GM12878 (cell line): ENCODE measurements at regions of chr1 and their contacts with region 1.

Region 1: GRCh38 chr1:90561911-90562310 is 155.2 kb downstream of the BARHL2 start:
- DNase-seq: no peak
- ATAC-seq: peak; percentile 65
- H3K4me3 ChIP-seq: no peak overlapping the region
- H3K27ac ChIP-seq: no peak overlapping the region
- H3K4me1 ChIP-seq: no peaks in the 10 kb centered on the region
- H3K27me3 ChIP-seq: no peaks in the 10 kb centered on the region
- CTCF ChIP-seq: no peak
- EP300 ChIP-seq: no peak
- POLR2A ChIP-seq: no peak
- RAD21 ChIP-seq: no peak

Region 2: DNA sequence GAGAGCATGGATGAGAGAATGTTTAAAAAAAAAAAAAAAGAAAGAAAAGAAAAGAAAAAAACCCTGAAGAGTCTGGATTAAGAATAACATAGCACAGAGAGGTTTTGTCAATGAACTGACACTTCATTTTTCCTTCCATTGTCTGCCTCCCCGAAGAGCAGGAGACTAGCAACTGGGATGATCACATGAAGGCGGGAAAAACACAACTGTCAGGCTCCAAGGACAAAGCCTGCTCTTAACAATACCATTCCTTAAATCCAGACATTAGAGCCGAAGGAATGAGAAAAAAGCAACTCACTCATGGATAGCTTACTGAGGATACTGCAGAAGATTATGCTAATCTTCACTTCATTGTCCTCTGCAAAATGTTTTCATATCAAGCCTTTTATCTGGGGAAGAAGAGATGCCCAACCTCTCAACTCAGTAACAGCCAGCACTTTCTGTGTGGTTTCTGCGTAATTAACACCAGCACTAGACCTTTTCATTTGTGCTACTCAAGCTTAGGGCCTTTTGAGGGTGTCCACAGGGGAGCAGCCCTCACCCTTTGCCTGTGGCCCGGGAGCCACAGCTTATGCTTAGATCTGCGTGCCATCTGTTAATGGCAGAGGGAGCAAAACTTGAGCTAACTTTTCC is 27.1 kb before region 1 on chr1:
- CTCF ChIA-PET with region 1: interaction called, 7 read pairs
- POLR2A ChIA-PET with region 1: interaction called, 6 read pairs
- RAD21 ChIA-PET with region 1: interaction called, 16 read pairs
- SMC1A ChIA-PET with region 1: interaction called, 22 read pairs
- in situ Hi-C with region 1: no loop called
- intact Hi-C with region 1: no loop called
- DNase-seq: no peak
- ATAC-seq: peak; percentile 64
- H3K4me3 ChIP-seq: no peak overlapping the region
- H3K27ac ChIP-seq: no peak overlapping the region
- H3K4me1 ChIP-seq: no peaks in the 10 kb centered on the region
- H3K27me3 ChIP-seq: peaks cover 0 to 3% of the 10 kb centered on the region in 2 experiments; a peak in 1 of 4 replicates
- CTCF ChIP-seq: no peak; a peak in 1 of 6 replicates
- EP300 ChIP-seq: 0 out of 4 replicates have a peak, but pooled peaks of 1 of the 2 experiments have one; percentile 28
- POLR2A ChIP-seq: no peak
- RAD21 ChIP-seq: no peak

Region 3: GRCh38 chr1:90850898-90851710 is 289.2 kb after region 1 on chr1:
- CTCF ChIA-PET with region 1: no interaction called
- POLR2A ChIA-PET with region 1: no interaction called
- RAD21 ChIA-PET with region 1: no interaction called
- SMC1A ChIA-PET with region 1: no interaction called
- in situ Hi-C with region 1: no loop called
- intact Hi-C with region 1: no loop called
- DNase-seq: no peak
- ATAC-seq: peak; percentile 99
- H3K4me3 ChIP-seq: peak overlapping the region; percentile 88
- H3K27ac ChIP-seq: no peak overlapping the region
- H3K4me1 ChIP-seq: peaks cover 5% of the 10 kb centered on the region; the same call in 1 of the 2 replicates
- H3K27me3 ChIP-seq: peaks cover 0 to 9% of the 10 kb centered on the region in 2 experiments; a peak in 3 of 4 replicates
- CTCF ChIP-seq: peak; percentile 33 to 70 (median 66); a peak in 4 of 6 replicates
- EP300 ChIP-seq: 0 out of 4 replicates have a peak, but pooled peaks of 1 of the 2 experiments have one; percentile 10
- POLR2A ChIP-seq: 0 out of 2 replicates have a peak, but pooled peaks have one; percentile 25
- RAD21 ChIP-seq: 0 out of 2 replicates have a peak, but pooled peaks have one; percentile 25